ENCODE measurements at regions of chr9 and their contacts with region 1.

Region 1: GRCh38 chr9:105541838-105542237 is 16.1 kb upstream of the FKTN start:
- DNase-seq: no peak
- H3K4me3 Mint-ChIP-seq: no peak overlapping the region
- H3K27ac Mint-ChIP-seq: peak overlapping the region; percentile 36
- H3K4me1 Mint-ChIP-seq: peaks cover 7% of the 10 kb centered on the region
- H3K27me3 Mint-ChIP-seq: no peaks in the 10 kb centered on the region

Region 2: GRCh38 chr9:105500108-105500766 is 41.6 kb before region 1 on chr9:
- intact Hi-C with region 1: no loop called
- DNase-seq: no peak
- H3K4me3 Mint-ChIP-seq: no peak overlapping the region
- H3K27ac Mint-ChIP-seq: no peak overlapping the region
- H3K4me1 Mint-ChIP-seq: no peaks in the 10 kb centered on the region
- H3K27me3 Mint-ChIP-seq: no peaks in the 10 kb centered on the region

Region 3: GRCh38 chr9:105557771-105558610 is 16.2 kb after region 1 on chr9 and contains the start of gene FKTN:
- intact Hi-C with region 1: loop called (anchors 2 kb)
- DNase-seq: peak; percentile 76
- H3K4me3 Mint-ChIP-seq: peak within 1 kb of the TSS; percentile 94
- H3K27ac Mint-ChIP-seq: peak within 1 kb of the TSS; percentile 71
- H3K4me1 Mint-ChIP-seq: peaks cover 22% of the 10 kb centered on the region
- H3K27me3 Mint-ChIP-seq: no peaks in the 10 kb centered on the region
- total RNA-seq, gene FKTN: 12.4 and 12.6 TPM in 2 replicates

Measured in activated T-helper 1 cell treated with anti-CD3 and anti-CD28 coated beads, Interleukin-12 subunit alpha, Interleukin-12 subunit beta, Interleukin-2, Interleukin-4 antibody, amounts not matched to agents 30 ng/mL and 10 ng/mL and 1 ng/mL, durations not matched to agents 14 hours and 24 hours and 36 hours (primary cell).